ENCODE measurements at regions of chrX and their contacts with region 1.

Region 1: GRCh38 chrX:19887911-19888879 is 795 bp upstream of the SH3KBP1 start:
- DNase-seq: peak in 8 of 10 donors; percentile 11 to 90 (median 23)

Region 2: GRCh38 chrX:19372170-19372546 is 516.0 kb before region 1 on chrX:
- intact Hi-C with region 1: loop called (anchors 2 kb)
- DNase-seq: peak in 9 of 10 donors; percentile 31 to 95 (median 58)

Region 3: GRCh38 chrX:19544693-19545305 is 343.4 kb before region 1 on chrX:
- intact Hi-C with region 1: loop called (anchors 5 kb)
- DNase-seq: peak in 3 of 10 donors; percentile 21 to 41 (median 36)

Region 4: GRCh38 chrX:19593690-19594089 is 294.5 kb before region 1 on chrX:
- intact Hi-C with region 1: loop called (anchors 2 kb)
- DNase-seq: no peak

Region 5: DNA sequence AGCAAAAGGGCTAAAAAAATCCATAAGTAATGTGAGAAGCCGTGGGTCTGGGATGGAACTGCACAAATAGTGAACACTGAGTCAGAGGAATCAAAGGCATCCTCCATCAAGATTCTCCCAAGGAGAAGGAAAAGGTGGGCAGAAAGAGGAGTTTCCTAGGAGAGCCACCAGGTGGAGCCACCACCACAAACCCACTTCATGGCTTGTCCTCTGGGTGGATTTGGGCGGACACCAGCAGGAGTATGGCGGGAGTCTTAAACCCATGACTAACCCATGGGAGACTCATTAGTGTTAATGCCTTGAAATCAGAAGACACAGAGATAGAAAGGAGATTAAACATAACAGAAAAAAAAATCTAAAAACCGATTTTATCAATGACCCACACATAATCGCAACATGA is 148.5 kb before region 1 on chrX:
- intact Hi-C with region 1: loop called (anchors 1 kb)
- DNase-seq: peak in 6 of 10 donors; percentile 18 to 88 (median 38)

Measured in posterior cingulate gyrus (tissue), 11 donors.